GM10248 (cell line): ENCODE measurements at regions of chr3 and their contacts with region 1.

Region 1: DNA sequence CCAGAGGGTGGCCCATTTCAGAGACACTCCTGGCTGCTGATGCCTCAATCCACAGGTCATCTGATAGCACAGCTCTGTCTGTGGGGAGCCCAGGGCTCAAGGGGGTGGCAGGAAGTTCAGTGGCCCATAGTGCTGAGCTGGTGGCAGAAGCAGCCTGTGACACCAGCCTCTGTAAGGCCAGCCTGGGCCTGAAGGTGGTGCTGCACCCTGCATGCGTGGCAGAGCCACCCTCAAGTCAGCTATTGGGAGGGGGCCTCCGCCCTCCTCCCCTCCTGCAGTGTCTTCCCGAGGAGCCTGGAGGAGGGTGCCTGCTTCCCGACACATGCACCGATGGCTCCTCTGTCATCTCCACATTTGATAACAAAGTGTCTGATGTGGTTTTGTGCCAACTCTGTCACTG is 3.0 kb downstream of the PLA1A start:
- DNase-seq: peak; percentile 71
- CTCF ChIP-seq: peak; percentile 90

Region 2: GRCh38 chr3:119570216-119570615 is 30.5 kb before region 1 on chr3:
- CTCF ChIA-PET with region 1: interaction called, 18 read pairs
- POLR2A ChIA-PET with region 1: no interaction called
- DNase-seq: peak; percentile 31
- CTCF ChIP-seq: no peak

Region 3: GRCh38 chr3:119588112-119588511 is 12.6 kb before region 1 on chr3:
- CTCF ChIA-PET with region 1: interaction called, 63 read pairs
- POLR2A ChIA-PET with region 1: no interaction called
- DNase-seq: no peak
- CTCF ChIP-seq: no peak

Region 4: DNA sequence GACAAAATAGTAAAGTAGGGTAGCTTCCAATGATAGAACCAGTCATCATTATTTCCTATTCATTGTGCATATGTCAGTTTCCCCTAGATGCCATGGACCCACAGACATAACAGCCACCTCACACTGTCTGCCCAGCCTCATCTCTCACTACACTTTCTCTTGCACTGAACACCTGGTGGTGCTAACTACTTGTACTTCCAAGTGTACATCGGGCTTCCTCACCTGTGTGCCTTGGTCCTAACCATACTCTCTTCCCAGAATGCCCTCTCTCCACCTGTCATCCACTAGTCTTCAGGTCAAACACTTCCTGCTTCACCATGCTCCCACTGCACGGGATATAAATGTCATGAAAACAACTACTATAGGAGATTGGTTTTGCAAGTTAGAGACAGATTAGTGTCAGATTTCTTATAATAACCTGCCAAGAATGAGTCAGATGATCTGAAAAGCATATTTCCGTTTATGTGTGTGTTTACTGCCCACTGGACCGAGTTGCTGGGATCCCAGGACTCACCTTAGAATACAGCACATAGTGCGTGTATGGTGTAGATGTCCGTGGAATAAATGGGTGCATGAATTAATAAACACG is 18.3 kb after region 1 on chr3:
- CTCF ChIA-PET with region 1: interaction called, 56 read pairs
- POLR2A ChIA-PET with region 1: no interaction called
- DNase-seq: no peak
- CTCF ChIP-seq: no peak

Region 5: GRCh38 chr3:119637679-119638525 is 37.2 kb after region 1 on chr3:
- CTCF ChIA-PET with region 1: interaction called, 54 read pairs
- POLR2A ChIA-PET with region 1: interaction called, 4 read pairs
- DNase-seq: peak; percentile 39
- CTCF ChIP-seq: no peak

Region 6: DNA sequence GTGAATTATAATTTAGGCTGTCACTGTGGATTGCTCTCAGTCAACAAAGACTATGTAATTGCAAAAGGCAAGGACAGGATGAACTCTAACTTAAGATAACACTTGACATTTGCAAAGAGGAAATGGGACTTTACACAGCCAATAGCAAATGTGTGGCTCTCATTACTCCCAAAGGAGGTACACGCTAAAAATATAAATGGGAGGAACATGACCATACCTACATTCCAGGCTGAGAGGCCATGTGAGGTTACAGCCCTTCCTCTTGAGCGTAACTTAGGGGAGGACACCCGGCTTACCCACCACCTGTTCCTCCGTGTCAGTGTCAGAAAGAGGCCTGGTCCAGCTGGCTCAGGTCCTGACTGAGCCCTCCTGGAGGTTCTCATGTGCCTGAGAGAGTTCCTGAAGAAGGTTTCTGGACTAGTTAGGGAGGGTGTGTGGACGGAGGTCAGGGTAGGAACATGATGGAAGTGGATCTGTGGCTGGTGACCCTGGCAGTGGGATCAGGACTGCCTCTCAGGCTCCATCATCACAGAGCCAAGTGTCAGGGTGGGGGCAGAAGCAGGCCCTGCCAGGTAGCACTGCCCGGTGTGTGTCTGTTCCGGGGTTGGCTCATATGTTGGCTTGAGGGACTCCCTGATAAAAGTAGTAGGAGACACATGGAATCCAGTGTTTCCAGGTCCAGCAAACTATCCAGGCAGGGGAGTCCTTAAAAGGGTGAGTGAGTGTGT is 51.7 kb after region 1 on chr3:
- CTCF ChIA-PET with region 1: no interaction called
- POLR2A ChIA-PET with region 1: no interaction called
- DNase-seq: no peak
- CTCF ChIP-seq: no peak

Region 7: GRCh38 chr3:119662604-119663373 is 62.1 kb after region 1 on chr3:
- CTCF ChIA-PET with region 1: interaction called, 16 read pairs
- POLR2A ChIA-PET with region 1: interaction called, 4 read pairs
- DNase-seq: no peak
- CTCF ChIP-seq: no peak